ENCODE measurements at regions of chr6 and their contacts with region 1.

Region 1: DNA sequence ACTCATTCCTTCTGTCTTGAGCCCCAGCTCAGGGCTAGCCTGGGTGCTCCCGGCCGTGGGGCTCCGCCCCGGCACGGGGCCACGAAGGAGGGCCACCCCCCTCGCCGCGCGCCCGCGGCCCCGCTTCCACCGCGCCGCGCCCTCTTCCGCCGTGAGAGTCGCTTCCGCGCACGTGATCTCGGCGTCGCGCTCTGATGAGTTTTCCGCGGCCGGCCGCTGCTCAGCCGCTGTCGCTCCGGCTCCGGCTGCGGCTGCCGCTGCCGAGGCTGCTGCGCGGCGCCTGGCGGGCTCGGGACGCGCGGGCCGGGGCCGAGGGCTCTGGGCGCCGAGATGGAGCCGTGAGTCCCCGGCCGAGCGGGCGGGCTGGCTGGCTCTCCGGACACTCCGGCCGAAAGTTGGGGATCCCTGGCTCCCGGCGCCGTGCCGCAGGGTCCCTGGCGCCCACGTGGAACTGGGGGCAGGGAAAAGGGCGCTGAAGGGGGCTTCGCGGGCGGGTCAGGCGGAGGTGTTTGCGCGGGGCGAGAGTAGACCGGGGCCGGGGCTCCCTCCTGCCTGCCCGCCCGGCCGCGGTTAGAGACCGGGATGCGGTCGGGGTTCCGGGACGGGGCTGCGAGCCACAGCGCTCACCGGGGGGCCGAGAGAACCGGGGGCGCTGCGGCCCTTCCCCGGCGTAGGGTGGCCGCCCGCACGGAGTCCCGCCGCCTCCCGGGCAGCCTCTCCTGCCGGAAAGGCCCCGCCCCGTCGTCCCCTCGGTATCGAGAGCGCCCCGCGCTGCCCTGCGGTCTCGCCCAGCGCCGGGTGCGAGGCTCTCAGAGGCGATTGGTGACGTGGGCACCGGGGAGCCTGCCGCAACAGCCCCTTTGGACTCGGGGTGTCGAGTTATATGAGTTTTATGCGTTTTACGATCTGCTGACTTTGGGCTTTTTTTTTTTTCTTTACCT is at the start of gene TMEM181:
- DNase-seq: peak; percentile 93
- ATAC-seq: peak; percentile 90
- H3K4me3 Mint-ChIP-seq: peak within 1 kb of the TSS; percentile 96
- H3K27ac Mint-ChIP-seq: peak within 1 kb of the TSS; percentile 92
- H3K4me1 Mint-ChIP-seq: peaks cover 35% of the 10 kb centered on the region
- H3K27me3 Mint-ChIP-seq: no peaks in the 10 kb centered on the region
- total RNA-seq, gene TMEM181: 8.3 to 9.9 TPM

Region 2: GRCh38 chr6:158168040-158168289 is 392.2 kb before region 1 on chr6 and contains the start of gene SERAC1:
- CTCF ChIA-PET with region 1: no interaction called
- POLR2A ChIA-PET with region 1: no interaction called
- intact Hi-C with region 1: loop called in 1 of 2 experiments (anchors 1 kb)
- DNase-seq: no peak
- ATAC-seq: peak; percentile 30
- H3K4me3 Mint-ChIP-seq: peak within 1 kb of the TSS; percentile 89
- H3K27ac Mint-ChIP-seq: peak within 1 kb of the TSS; percentile 95
- H3K4me1 Mint-ChIP-seq: peaks cover 21% of the 10 kb centered on the region
- H3K27me3 Mint-ChIP-seq: no peaks in the 10 kb centered on the region
- total RNA-seq, gene SERAC1: 3.9 to 5.7 TPM

Region 3: DNA sequence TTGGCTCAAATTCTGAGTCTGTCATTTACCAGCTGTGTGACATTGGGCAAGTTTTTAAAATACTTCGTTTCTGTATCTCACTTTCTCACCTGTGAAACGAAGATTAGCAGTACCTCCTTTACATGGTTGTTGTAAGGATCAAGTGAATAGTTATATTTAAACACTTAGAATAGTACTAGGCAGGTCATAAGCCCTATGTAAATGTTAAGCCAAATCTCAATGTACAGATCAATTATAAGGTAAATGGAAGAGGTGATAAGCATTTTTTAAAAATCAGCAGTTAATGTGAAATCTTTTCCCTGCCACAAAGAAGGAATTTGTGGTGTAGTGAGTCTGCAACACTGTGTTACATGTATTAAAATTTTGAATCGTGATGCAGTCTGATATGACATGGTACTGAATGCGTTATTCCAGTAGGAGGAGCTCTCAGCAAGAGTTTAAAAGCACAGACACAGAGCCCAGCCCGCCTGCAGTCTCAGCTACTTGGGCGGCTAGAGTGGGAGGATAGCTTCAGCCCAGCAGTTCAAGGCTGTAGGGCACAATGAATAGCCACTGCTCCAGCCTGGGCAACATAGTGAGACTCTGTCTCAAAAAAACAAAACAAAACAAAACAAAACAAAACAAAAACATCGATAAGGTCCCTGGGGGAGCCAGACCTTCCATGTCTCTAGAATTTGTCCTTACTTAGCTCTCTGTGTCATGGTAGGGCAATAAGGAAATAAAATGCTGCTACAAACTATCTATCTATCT is 346.1 kb before region 1 on chr6:
- CTCF ChIA-PET with region 1: interaction called, 3 read pairs
- POLR2A ChIA-PET with region 1: no interaction called
- intact Hi-C with region 1: loop called in 1 of 2 experiments (anchors 5 kb)
- DNase-seq: peak; percentile 75
- ATAC-seq: peak; percentile 97
- H3K4me3 Mint-ChIP-seq: no peak overlapping the region
- H3K27ac Mint-ChIP-seq: no peak overlapping the region
- H3K4me1 Mint-ChIP-seq: peaks cover 10% of the 10 kb centered on the region
- H3K27me3 Mint-ChIP-seq: no peaks in the 10 kb centered on the region

Region 4: DNA sequence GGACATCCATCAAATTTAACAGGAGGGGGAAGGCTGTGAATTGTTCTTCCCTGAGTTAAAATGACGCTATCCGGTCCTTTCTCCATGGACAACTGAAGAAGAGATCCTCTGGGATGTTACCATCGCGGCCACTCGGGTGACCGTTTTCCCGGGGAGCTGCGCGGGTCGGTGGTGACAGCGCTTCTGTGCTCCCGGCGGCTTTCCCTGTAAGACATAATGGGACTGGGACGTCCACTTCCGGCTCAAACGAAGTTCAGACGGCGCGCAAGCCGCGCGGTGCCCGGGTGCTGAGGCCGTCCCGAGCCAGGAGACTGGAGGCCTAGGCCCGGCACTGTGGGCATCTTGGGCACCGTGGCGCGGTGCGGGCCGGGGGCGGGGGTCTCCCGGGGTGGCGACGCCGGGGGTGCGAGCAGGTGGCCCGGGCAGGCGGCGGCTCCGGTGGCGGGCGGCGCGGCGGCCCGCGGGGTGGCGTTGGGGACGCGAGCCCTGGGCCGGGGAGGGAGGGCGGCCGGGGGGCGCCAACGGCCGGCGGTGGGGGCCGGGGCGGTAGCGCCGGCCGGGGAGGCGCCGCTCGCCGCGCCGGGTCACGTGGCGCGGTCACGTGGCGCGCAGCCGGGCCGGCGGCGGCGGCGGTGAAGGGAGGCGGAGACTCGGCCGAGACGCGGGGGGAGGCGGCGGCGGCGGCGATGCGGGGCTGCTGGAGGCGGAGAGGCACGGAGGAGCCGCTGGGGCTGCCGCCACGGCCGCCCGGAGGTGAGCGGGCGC is 328.4 kb before region 1 on chr6:
- CTCF ChIA-PET with region 1: no interaction called
- POLR2A ChIA-PET with region 1: no interaction called
- intact Hi-C with region 1: loop called in 1 of 2 experiments (anchors 1 kb)
- DNase-seq: peak; percentile 83
- ATAC-seq: peak; percentile 79
- H3K4me3 Mint-ChIP-seq: peak overlapping the region; percentile 86
- H3K27ac Mint-ChIP-seq: peak overlapping the region; percentile 88
- H3K4me1 Mint-ChIP-seq: peaks cover 30% of the 10 kb centered on the region
- H3K27me3 Mint-ChIP-seq: no peaks in the 10 kb centered on the region

Region 5: DNA sequence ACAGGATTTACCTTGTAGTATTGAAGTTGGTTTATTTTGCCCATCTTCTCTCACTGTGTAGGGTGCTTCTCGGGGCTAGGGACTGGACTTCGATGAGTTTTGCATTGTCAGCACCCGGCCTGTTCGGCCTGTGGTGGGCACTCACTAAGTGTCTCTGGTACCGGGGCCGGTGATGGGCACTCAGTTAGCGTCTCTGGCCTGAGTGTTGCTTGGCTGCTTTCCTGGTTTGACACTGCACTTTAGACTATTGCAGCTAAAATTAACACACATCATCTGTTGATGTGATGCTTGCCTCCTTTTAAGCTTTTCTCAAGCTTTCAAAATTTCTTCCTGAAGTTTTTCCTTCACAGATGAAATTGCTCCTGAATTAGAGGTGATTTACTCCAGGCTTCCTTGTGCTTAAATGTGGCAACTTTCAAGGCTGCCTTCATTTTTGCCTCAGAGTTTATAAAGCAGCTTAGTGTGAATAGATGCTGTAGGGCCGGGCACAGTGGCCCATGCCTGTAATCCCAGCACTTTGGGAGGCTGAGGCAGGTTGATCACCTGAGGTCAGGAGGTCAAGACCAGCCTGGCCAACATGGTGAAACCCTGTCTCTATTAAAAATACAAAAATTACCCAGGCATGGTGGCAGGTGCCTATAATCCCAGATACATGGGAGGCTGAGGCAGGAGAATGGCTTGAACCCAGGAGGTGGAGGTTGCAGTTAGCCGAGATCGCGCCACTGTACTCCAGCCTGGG is 289.6 kb before region 1 on chr6:
- CTCF ChIA-PET with region 1: no interaction called
- POLR2A ChIA-PET with region 1: no interaction called
- intact Hi-C with region 1: loop called in 1 of 2 experiments (anchors 1 kb)
- DNase-seq: peak; percentile 45
- ATAC-seq: no peak
- H3K4me3 Mint-ChIP-seq: peak overlapping the region; percentile 15
- H3K27ac Mint-ChIP-seq: no peak overlapping the region
- H3K4me1 Mint-ChIP-seq: peaks cover 29% of the 10 kb centered on the region
- H3K27me3 Mint-ChIP-seq: no peaks in the 10 kb centered on the region

Region 6: GRCh38 chr6:158571826-158572652 is 11.9 kb after region 1 on chr6:
- CTCF ChIA-PET with region 1: no interaction called
- POLR2A ChIA-PET with region 1: no interaction called
- intact Hi-C with region 1: loop called in 1 of 2 experiments (anchors 1 kb)
- DNase-seq: no peak
- ATAC-seq: no peak
- H3K4me3 Mint-ChIP-seq: no peak overlapping the region
- H3K27ac Mint-ChIP-seq: no peak overlapping the region
- H3K4me1 Mint-ChIP-seq: peaks cover 56% of the 10 kb centered on the region
- H3K27me3 Mint-ChIP-seq: no peaks in the 10 kb centered on the region